ENCODE measurements at regions of chr5 and their contacts with region 1.

Region 1: GRCh38 chr5:172454358-172455086 is at the start of gene SH3PXD2B:
- DNase-seq: peak in 1 of 2 donors; percentile 80
- H3K4me3 ChIP-seq: peak within 1 kb of the TSS; percentile 89 to 94
- H3K27ac ChIP-seq: peak within 1 kb of the TSS; percentile 83 to 87
- H3K4me1 ChIP-seq: peaks cover 9 to 19% of the 10 kb centered on the region in 2 donors
- H3K27me3 ChIP-seq: no peaks in the 10 kb centered on the region
- CTCF ChIP-seq: no peak
- total RNA-seq, gene SH3PXD2B: 60.8 TPM

Region 2: DNA sequence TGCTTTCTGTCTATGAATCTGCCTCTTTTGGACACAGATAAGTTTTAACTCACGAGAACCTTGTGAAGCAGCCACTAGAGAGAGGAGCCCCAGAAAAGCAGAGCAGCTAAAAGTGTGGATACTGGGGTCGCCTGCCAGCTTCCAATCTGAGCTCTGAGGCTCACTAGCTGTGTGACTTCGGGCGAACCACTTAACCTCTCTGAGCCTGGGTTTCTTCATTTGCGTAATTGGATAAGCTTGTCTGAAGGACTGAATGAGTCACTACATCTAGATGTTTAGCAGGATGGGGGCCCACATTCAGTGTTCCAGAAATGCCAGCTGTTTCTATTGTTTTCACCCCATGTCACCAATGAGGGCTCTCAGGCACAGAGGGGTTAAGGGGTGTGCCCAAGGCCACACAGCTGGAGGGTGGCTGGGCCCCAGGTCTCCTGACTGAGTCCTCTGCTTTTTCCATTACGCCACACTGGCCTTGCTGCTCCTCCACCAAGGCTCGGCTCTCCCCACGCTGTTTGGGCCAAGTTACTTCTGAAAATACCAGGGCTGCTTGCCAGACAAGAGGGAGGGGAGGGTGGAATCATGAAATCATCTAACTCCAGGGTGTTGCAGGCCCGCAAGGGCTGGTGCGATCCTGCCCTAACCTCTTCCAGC is 36.4 kb before region 1 on chr5:
- intact Hi-C with region 1: loop called (anchors 1 kb)
- DNase-seq: peak; percentile 79 to 98
- H3K4me3 ChIP-seq: peak overlapping the region in 1 of 2 donors; percentile 18
- H3K27ac ChIP-seq: peak overlapping the region; percentile 71 to 81
- H3K4me1 ChIP-seq: peaks cover 19 to 50% of the 10 kb centered on the region in 2 donors
- H3K27me3 ChIP-seq: no peaks in the 10 kb centered on the region
- CTCF ChIP-seq: no peak

Region 3: GRCh38 chr5:172958331-172959046 is 504.0 kb after region 1 on chr5:
- intact Hi-C with region 1: loop called (anchors 10 kb)
- DNase-seq: peak in 1 of 2 donors; percentile 86
- H3K4me3 ChIP-seq: peak overlapping the region; percentile 67 to 69
- H3K27ac ChIP-seq: peak overlapping the region; percentile 87 to 95
- H3K4me1 ChIP-seq: peaks cover 6 to 44% of the 10 kb centered on the region in 2 donors
- H3K27me3 ChIP-seq: no peaks in the 10 kb centered on the region
- CTCF ChIP-seq: no peak